ENCODE measurements at regions of chr2 and their contacts with region 1.

Region 1: DNA sequence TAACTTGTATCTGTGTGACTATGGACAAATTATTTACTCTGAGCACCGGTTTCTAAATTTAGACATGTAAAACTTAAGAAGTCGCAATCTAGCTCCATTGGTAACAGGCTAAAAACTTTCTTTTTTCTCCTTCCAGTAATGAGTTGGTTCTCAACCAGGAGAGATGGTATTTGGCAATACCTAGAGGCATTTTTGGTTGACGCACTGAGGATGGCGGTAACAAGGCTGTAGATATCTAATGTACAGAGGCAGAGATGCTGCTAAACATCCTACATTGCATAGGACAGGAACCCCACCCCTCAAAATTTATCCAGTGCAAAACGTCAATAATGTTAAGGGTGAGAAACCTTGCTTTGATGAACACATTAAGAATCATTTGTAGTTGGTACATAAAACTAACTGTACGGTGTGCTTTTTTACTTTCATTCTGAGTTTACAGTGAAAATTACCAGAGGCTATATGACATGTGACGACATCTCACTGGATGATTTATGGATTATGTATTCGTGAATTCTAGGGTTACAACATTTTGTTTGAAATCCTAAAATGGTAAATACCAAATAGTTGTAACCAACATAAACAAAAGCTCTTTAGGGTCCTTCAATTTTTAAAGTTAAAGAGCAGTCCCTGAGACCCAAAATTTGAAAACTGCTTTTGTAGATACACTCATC is 91.3 kb downstream of the TLK1 start:
- DNase-seq: no peak
- H3K4me3 ChIP-seq: no peak overlapping the region
- H3K27ac ChIP-seq: no peak overlapping the region
- H3K4me1 ChIP-seq: no peaks in the 10 kb centered on the region
- H3K27me3 ChIP-seq: no peaks in the 10 kb centered on the region
- CTCF ChIP-seq: no peak

Region 2: DNA sequence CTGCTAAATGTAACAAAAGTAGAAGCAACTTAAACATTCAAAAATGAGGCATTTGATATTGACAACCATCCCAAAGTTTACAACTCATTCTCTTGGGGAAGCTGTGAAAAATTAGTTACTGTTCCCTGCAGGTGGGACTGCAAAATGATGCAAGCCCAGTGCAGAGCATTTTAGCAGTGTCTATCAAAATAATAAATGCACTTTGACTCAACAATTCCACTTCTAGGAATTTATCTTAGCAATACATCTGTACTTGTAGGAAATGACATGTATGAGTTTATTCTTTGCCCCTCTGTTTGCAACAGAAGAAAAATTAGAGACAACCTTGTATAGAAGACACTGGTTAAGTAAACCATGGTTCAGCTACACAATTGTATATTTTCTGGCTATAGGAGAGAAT is 139.2 kb after region 1 on chr2:
- CTCF ChIA-PET with region 1: no interaction called
- POLR2A ChIA-PET with region 1: interaction called, 10 read pairs
- intact Hi-C with region 1: no loop called
- DNase-seq: no peak
- H3K4me3 ChIP-seq: no peak overlapping the region
- H3K27ac ChIP-seq: no peak overlapping the region
- H3K4me1 ChIP-seq: no peaks in the 10 kb centered on the region
- H3K27me3 ChIP-seq: no peaks in the 10 kb centered on the region
- CTCF ChIP-seq: no peak